ENCODE measurements at regions of chr5 and their contacts with region 1.

Region 1: DNA sequence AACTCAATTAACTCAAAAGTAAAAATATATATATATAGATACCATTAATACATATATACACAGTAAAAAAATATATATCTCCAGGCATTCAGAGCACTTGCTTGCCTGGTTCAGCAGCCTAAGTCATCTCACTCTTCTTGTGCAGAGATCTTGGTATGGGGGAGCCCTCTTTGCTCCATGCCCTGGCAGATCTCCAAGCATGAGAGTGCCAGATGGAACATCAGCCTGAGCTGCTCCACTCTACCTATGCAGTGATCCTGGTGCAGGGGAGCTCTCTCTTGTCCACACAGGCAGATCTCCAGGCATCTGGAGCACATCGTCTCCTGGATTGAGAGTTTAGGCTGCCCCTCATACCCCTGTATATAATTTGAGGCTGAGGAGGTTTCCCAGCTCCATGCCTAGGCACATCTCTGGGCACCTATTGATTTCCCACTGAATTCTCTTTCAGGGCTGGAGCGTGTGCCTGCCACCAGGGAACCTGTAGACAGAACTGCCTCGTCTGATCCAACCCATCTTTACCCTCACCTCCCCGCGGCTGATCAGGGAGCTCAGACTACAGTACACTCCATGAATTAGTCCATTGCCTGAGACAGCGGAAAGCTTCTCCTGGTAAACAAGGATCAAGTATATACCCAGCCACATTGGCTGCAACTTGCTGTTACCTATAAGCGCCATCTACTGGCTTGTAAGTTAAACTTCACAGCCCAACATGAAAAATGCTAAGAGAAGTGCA is 342.4 kb upstream of the GRIA1 start:
- H3K4me3 Mint-ChIP-seq: no peak overlapping the region
- H3K27ac Mint-ChIP-seq: no peak overlapping the region
- H3K4me1 Mint-ChIP-seq: no peaks in the 10 kb centered on the region
- H3K27me3 Mint-ChIP-seq: no peaks in the 10 kb centered on the region

Region 2: DNA sequence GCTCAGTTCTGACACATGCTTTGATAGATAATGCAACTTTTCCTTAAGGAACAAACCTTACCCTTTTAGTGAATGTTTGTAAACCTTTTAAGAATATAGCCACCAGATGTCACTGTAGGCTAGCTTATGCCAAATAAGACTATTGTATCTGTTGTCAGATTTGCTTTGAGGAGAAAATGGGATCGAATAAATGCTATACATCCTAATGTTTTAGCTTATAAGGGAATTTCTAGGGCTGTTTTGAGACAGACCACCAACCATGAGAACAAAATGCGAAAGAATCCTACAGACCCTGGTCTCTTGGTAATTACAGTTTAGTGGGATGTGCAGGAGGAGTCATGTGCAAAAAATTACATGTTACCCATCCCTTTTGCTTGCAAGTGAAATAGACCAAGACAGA is 615.3 kb before region 1 on chr5:
- intact Hi-C with region 1: loop called (anchors 5 kb)
- H3K4me3 Mint-ChIP-seq: no peak overlapping the region
- H3K27ac Mint-ChIP-seq: no peak overlapping the region
- H3K4me1 Mint-ChIP-seq: peaks cover 8% of the 10 kb centered on the region
- H3K27me3 Mint-ChIP-seq: no peaks in the 10 kb centered on the region

Region 3: GRCh38 chr5:153086486-153086885 is 61.6 kb before region 1 on chr5:
- intact Hi-C with region 1: no loop called
- H3K4me3 Mint-ChIP-seq: no peak overlapping the region
- H3K27ac Mint-ChIP-seq: no peak overlapping the region
- H3K4me1 Mint-ChIP-seq: no peaks in the 10 kb centered on the region
- H3K27me3 Mint-ChIP-seq: no peaks in the 10 kb centered on the region

Region 4: DNA sequence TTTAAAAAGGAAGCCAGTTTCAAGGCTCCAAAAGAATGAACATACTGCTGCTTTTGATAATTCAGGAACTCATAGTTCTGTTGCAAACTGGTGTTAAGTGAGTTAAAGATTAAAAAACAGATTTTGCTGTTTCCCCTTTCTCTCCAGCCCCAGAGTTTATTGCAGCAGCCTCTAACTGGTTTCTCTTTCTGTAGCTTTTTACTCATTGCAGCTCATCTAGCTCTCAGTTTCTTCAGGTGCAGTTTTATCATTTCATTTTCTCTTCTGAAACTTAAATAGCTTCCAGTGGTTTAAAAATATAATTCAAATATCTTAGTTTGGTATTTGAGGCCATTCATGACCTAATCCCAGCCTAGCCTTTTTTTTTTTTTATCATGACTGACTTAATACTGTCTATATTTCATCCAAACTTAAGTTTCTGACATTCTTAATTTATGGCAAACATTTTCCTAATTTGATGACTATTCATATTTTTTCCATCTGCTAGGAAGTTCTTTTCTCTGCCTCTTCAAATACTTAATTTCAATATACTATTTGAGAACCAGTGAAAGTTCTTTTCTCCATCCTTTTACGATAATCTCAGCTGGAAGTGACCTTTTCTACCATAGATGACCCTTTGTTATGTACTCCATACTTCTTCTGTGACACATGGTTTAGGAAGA is 89.7 kb after region 1 on chr5:
- intact Hi-C with region 1: no loop called
- H3K4me3 Mint-ChIP-seq: no peak overlapping the region
- H3K27ac Mint-ChIP-seq: no peak overlapping the region
- H3K4me1 Mint-ChIP-seq: no peaks in the 10 kb centered on the region
- H3K27me3 Mint-ChIP-seq: no peaks in the 10 kb centered on the region

Region 5: DNA sequence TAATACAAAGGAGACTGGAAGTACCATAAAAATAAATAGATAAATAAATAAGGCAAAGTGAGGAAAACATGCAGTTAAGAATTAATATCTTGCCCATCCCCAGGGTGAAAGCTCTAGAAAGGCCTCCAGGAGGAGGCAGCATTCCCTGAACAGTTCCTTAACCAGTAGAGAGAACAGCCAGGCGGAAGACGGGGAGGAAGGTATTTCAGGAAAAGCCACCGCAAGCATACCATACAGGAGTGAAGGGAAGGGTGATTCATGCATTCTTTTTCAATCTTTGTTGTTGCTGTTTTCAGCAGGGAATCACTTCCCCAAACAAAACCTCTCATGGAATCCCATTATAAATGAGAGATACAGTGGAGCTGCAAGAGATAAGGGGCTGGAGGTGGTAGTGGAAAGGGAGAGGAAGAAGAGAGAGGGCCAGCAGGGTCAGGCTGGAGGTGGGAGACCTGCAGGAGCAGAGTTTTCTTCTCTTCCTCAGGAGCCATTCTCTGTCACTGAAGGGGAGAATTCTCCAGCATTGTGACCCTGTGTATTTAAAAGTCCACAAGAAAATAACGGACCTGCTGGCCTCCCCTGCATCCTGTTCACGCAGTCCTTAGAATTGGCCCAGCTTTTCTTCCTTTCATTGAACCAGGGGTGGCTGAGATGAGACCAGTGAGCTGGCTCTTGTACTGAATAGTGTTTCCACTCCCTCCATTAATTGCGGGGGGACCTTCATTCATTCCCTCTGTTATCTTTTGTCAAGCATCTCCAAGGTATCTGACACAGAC is 634.7 kb after region 1 on chr5:
- intact Hi-C with region 1: no loop called
- H3K4me3 Mint-ChIP-seq: no peak overlapping the region
- H3K27ac Mint-ChIP-seq: no peak overlapping the region
- H3K4me1 Mint-ChIP-seq: no peaks in the 10 kb centered on the region
- H3K27me3 Mint-ChIP-seq: no peaks in the 10 kb centered on the region